MCF 10A (cell line): ENCODE measurements at regions of chr10 and their contacts with region 1.

Region 1: DNA sequence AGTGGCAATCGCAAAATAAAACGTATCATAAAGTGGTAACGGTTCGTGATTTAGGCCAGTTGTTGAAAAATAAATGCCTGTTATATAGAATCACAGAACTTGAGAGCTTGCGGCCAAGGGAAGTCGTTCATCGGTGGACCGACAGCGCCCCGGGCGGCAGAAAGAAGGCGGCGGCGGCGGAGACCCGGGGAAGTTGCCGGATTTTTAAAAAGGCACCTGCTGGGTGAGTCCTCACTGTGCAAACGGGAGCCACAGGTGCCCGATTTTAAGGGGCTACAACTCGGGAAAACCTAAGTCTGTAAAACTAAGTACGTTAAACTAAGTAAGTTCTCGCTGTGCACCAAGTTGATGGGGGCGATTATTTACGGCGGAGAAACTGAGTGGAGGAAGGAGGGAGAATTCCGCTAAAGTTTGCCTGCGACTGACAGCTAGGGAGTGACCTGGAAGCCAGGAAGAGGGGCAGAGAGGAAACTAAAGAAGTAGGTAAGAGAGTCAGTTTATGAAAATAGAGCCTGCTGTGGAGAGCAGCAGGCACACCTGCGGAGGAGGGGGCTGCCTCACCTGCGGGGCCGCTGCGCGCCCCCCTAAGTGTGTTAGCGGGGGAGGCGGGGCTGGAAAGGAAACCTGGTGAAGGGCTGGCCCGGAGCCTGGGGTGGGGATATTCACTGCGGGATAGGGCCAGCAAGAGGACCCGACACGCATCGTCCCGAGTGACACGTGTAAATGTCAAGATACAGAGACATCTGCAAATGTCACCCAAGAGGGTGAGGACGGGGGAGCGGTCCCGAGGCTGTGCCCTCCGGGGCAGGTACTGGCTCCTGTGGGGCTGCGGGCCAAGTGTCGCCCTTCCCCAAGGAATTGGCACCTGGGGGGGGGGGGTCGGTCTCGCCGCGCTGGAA is 1.0 kb downstream of the ADAM12 start:
- DNase-seq: peak; percentile 78
- H3K4me3 Mint-ChIP-seq: peak overlapping the region; percentile 86
- H3K27ac Mint-ChIP-seq: peak overlapping the region; percentile 18
- H3K4me1 Mint-ChIP-seq: peaks cover 9% of the 10 kb centered on the region
- H3K27me3 Mint-ChIP-seq: peaks cover 11% of the 10 kb centered on the region
- CTCF ChIP-seq: peak; percentile 74

Region 2: DNA sequence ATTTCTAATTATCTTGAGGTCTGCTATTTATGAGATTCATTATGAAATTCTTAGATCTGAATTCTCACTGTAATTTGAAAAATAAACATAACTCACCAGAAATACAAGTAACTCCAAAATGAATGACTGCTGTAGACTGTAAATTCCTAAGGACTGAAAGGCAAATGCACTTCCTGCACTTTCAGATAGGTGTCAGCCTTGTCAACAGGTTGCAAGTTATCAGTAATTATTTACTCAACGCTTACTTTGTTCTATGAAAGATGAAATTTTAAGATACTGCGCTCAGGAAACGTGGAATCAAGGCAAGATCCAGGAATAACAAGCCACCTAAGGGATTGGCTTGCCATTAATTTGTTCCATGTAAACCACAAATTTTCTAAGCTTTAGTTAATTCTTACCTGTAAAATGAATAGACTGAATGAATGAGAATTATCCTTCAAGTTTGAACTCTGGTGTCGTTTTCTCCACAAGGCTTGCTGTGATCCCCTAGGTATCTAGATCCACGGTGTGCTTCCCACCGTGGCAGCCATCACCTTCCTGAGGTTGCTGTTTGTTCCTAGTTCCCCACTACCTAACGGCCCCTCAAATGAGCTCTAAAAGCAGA is 518.8 kb before region 1 on chr10:
- CTCF ChIA-PET with region 1: no interaction called
- POLR2A ChIA-PET with region 1: no interaction called
- intact Hi-C with region 1: loop called (anchors 2 kb)
- DNase-seq: peak; percentile 57
- H3K4me3 Mint-ChIP-seq: no peak overlapping the region
- H3K27ac Mint-ChIP-seq: no peak overlapping the region
- H3K4me1 Mint-ChIP-seq: peaks cover 9% of the 10 kb centered on the region
- H3K27me3 Mint-ChIP-seq: no peaks in the 10 kb centered on the region
- CTCF ChIP-seq: peak; percentile 89

Region 3: DNA sequence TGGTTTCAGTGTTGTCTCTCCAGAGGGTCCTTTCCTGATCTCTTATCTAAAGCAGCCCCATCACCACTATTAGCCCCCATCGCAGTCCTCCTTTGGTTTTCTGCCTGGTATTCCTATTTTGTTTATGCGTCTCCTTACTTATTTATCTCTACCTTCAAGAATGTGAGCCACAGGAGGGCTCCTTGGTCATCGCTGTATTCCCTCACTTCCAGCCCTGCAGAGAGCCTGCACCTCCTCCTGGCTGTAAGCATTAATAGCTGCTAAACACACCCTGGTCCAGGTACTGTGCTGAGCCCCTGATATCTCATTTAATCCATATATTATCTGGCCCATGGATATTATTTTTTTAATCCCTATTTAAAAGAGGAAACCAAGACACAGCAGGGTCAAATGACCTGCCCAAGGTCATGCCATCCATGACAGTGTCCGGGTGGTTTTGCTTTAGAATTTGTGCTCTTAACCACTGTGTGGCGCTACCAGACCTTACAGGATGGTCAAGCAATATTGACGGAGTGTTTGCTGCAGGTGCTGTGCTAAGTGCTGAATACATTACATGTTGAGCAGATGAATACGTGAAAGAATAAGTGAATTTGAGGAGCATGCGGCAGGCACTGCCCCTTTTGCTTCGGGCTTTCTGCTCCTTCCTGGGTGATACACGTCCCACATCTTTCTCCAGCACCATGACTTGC is 226.2 kb before region 1 on chr10:
- CTCF ChIA-PET with region 1: interaction called, 3 read pairs
- POLR2A ChIA-PET with region 1: no interaction called
- intact Hi-C with region 1: loop called (anchors 1 kb)
- DNase-seq: peak; percentile 54
- H3K4me3 Mint-ChIP-seq: no peak overlapping the region
- H3K27ac Mint-ChIP-seq: no peak overlapping the region
- H3K4me1 Mint-ChIP-seq: no peaks in the 10 kb centered on the region
- H3K27me3 Mint-ChIP-seq: peaks cover 28% of the 10 kb centered on the region
- CTCF ChIP-seq: peak; percentile 48

Region 4: GRCh38 chr10:126459878-126460481 is 72.7 kb after region 1 on chr10:
- CTCF ChIA-PET with region 1: no interaction called
- POLR2A ChIA-PET with region 1: no interaction called
- intact Hi-C with region 1: loop called (anchors 1 kb)
- DNase-seq: peak; percentile 100
- H3K4me3 Mint-ChIP-seq: no peak overlapping the region
- H3K27ac Mint-ChIP-seq: peak overlapping the region; percentile 68
- H3K4me1 Mint-ChIP-seq: peaks cover 10% of the 10 kb centered on the region
- H3K27me3 Mint-ChIP-seq: no peaks in the 10 kb centered on the region
- CTCF ChIP-seq: no peak

Region 5: DNA sequence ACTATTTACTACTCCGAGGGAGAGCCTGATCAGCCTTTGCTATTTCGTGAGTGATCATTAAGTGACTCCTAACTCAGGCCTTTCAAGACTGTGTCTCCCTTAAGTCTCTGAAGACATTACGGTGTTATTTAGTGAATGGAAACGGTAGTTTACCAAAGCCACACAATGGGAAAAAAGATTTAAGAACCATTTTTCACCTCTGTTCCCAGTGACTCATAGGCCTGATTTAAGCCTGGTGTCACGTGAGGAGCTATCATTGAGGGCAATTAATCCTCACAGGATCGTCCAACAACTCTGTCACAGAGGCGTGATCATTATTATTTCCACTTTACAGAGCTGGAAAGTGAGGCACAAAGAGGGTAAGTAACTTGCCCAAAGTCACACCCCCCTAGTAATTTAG is 262.9 kb after region 1 on chr10:
- CTCF ChIA-PET with region 1: no interaction called
- POLR2A ChIA-PET with region 1: no interaction called
- intact Hi-C with region 1: no loop called
- DNase-seq: no peak
- H3K4me3 Mint-ChIP-seq: no peak overlapping the region
- H3K27ac Mint-ChIP-seq: no peak overlapping the region
- H3K4me1 Mint-ChIP-seq: peaks cover 10% of the 10 kb centered on the region
- H3K27me3 Mint-ChIP-seq: peaks cover 14% of the 10 kb centered on the region
- CTCF ChIP-seq: no peak

Region 6: GRCh38 chr10:126749015-126749655 is 361.9 kb after region 1 on chr10:
- CTCF ChIA-PET with region 1: interaction called, 4 read pairs
- POLR2A ChIA-PET with region 1: no interaction called
- intact Hi-C with region 1: loop called (anchors 2 kb)
- DNase-seq: peak; percentile 80
- H3K4me3 Mint-ChIP-seq: no peak overlapping the region
- H3K27ac Mint-ChIP-seq: no peak overlapping the region
- H3K4me1 Mint-ChIP-seq: no peaks in the 10 kb centered on the region
- H3K27me3 Mint-ChIP-seq: peaks cover 40% of the 10 kb centered on the region
- CTCF ChIP-seq: peak; percentile 88